ENCODE measurements at regions of chr1 and their contacts with region 1.

Region 1: DNA sequence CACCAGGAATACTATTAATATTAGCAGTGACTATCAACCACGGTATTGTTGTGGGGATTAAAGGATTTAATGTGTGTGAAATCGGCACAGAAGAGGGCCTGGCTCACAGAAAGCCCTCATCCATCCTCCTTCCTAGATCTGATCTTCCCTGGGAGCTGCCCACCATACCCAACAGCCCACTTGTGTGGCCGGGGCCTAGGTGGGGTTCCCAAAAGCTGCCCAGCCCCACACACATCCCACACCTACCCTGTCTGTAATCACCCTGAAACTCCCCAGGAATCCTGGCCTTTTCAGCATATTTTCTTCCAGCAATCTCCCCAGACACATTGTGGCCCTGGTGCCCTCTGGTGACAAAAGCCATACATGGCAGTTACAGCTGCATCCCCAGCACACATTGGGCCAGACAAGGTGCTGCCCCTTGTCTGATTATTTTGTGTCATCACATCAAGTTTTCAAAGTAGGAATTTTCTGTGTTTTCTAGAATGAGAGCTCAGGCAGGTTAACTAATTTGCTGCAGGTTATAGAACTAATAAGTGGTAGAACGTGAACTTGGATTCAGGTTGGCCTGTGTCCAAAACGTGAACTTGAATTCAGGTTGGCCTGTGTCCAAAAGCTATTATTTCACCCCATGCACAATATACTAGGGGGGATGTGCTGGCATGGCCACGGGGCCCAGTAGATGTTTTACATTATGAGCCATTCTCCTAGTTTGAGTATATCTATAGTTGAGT is 5.3 kb upstream of the SLC6A9 start:
- DNase-seq: peak; percentile 85
- ATAC-seq: peak; percentile 89
- H3K4me3 Mint-ChIP-seq: no peak overlapping the region
- H3K27ac Mint-ChIP-seq: no peak overlapping the region
- H3K4me1 Mint-ChIP-seq: peaks cover 5% of the 10 kb centered on the region
- H3K27me3 Mint-ChIP-seq: no peaks in the 10 kb centered on the region

Region 2: DNA sequence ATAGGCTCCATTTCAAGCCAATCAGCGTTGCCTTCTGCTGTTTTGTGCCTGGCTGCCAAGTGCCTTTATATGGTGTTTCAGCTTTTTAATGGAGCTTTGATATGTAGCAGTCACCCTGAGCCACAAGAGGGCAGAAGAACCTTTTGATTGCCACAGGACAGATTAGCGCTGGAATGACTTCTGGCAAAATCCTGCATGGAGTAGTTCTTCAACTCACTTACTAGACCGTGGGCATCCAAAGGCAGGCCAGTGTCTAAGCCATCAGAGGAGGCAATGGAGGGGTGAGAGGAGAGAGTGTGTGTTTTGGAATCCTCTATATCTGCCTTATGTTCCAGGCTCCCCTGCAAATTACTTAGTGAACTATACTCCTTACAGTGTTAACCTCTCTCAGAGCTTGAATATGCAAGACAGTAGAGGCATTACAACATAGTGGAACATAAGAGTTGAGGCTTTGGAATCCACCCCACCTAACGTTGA is 273.0 kb before region 1 on chr1:
- CTCF ChIA-PET with region 1: interaction called, 11 read pairs
- POLR2A ChIA-PET with region 1: no interaction called
- intact Hi-C with region 1: loop called (anchors 2 to 10 kb)
- DNase-seq: peak; percentile 59
- ATAC-seq: peak; percentile 90
- H3K4me3 Mint-ChIP-seq: no peak overlapping the region
- H3K27ac Mint-ChIP-seq: no peak overlapping the region
- H3K4me1 Mint-ChIP-seq: no peaks in the 10 kb centered on the region
- H3K27me3 Mint-ChIP-seq: no peaks in the 10 kb centered on the region

Region 3: DNA sequence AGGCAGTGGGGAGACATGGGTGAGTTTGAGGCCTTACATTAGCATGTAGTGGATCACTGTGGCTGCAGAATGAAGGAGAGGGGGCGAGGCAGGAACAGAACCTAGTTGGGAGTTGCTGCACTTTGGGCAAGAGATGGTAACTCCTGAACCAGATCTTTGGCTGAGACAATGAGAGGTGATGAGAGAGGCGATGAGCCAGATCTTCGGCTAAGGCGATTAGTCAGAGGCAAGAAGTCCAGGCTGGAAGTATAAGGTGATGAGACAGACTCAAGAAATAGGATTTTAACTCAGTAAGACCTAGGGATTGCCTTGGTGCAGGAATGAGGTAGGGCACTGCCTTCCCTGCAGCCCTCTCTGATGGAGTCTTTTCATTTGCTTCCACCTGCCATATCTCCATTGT is 112.1 kb before region 1 on chr1:
- CTCF ChIA-PET with region 1: no interaction called
- POLR2A ChIA-PET with region 1: no interaction called
- intact Hi-C with region 1: no loop called
- DNase-seq: no peak
- ATAC-seq: no peak
- H3K4me3 Mint-ChIP-seq: no peak overlapping the region
- H3K27ac Mint-ChIP-seq: no peak overlapping the region
- H3K4me1 Mint-ChIP-seq: peaks cover under 1% of the 10 kb centered on the region
- H3K27me3 Mint-ChIP-seq: no peaks in the 10 kb centered on the region

Region 4: DNA sequence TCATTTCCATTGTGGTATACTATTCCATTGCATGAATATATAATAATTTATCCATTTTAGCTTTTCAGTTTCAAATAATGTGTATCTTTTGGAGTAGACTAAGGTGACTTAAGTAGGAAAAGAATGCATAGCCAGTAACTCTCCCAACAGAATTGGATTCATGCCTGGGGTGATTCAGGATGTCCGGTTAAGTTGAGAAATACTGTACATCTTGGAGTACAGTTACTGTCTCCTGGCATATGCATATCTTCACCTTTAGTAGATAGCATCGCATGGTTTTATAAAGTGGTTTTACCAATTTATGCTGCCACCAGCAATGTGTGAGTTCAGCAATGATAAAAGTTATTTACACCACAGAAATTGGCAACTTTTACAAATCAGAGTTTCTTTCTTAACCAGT is 13.3 kb after region 1 on chr1:
- CTCF ChIA-PET with region 1: interaction called, 22 read pairs
- POLR2A ChIA-PET with region 1: interaction called, 3 read pairs
- intact Hi-C with region 1: no loop called
- DNase-seq: no peak
- ATAC-seq: no peak
- H3K4me3 Mint-ChIP-seq: no peak overlapping the region
- H3K27ac Mint-ChIP-seq: no peak overlapping the region
- H3K4me1 Mint-ChIP-seq: peaks cover 21% of the 10 kb centered on the region
- H3K27me3 Mint-ChIP-seq: peaks cover 8% of the 10 kb centered on the region

Measured in activated CD4-positive, alpha-beta T cell treated with anti-CD3 and anti-CD28 coated beads for 36 hours (primary cell).